ENCODE measurements at regions of chr10 and their contacts with region 1.

Region 1: DNA sequence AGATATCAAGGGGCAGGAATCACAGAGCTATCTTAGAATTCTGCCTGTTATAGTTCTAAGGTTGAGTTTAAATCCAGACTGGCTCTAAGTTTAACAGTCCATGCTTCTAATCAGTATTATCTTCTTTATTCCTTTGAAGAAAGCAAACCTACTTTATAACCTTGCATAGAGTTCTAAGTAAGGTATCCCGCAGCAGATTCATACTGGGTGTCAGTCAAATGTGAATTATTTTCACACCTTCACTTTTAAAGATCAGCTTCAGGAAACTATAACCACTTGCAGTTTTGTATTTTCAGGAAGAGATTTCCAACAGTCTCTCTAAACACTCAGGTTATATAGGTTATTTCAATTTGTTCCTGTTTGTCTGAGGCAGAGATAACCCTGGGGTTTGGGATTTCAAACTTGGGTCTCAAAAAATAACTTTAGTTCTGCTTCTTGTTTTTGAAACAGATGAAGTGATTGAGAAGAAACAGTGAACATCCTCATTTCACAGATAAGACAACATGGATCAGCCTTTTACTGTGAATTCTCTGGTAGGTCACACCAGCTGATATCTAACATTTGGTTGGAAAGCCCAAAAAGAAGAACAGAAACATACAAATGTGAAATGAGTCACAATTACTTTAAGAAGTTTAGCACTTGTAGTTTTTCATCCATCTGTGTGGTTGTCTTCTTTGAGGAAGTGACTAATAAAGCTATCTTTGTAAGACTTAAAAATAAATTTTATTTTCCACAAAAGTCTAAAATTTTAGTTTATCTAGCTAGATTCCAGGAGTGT is 21.4 kb downstream of the STAMBPL1 start:
- DNase-seq: no peak
- H3K4me3 Mint-ChIP-seq: peak overlapping the region; percentile 2
- H3K27ac Mint-ChIP-seq: peak overlapping the region; percentile 82
- H3K4me1 Mint-ChIP-seq: peaks cover 59% of the 10 kb centered on the region
- H3K27me3 Mint-ChIP-seq: no peaks in the 10 kb centered on the region

Region 2: GRCh38 chr10:88820748-88821389 is 80.5 kb before region 1 on chr10:
- CTCF ChIA-PET with region 1: interaction called, 3 read pairs
- intact Hi-C with region 1: loop called (anchors 1 kb)
- DNase-seq: no peak
- H3K4me3 Mint-ChIP-seq: no peak overlapping the region
- H3K27ac Mint-ChIP-seq: no peak overlapping the region
- H3K4me1 Mint-ChIP-seq: peaks cover 27% of the 10 kb centered on the region
- H3K27me3 Mint-ChIP-seq: no peaks in the 10 kb centered on the region

Region 3: DNA sequence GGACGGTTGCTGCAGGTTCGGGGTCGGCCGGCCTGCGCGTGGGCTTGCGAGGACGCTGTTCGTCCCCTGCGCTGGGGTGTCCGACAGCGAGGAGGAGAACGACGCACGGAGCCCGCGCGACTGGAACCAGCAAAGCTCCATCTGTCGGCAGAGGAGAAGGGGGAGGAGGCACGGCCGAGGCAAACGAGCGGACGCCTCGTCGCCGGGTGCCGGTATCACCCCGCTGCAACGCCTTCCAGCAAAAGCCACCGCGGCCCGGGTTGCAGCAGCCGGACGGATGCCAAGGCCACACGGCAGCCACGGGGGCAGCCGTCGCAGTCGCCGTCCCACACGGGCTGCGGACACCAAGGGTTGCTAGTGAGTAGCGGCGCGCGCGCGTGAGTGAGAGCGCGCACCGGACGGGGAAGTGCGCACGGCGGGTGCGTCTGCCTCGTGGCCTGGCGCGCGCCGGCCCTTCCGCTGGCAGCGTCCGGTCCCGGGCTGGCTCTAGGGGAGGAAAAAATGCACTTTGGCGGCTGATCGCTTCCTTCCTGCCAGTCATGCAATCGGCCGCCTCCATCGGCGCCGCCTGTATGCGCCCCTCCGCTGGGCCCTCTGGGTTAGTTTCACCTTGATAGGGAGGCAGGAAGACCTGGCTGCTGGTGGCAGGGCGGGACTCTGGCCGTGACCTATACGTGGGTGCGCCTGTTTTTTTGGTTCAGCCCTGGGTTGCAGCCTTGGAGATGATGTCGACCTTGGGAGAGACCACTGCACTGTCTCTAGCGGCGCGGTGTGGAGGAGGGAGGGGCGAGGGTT is 20.9 kb before region 1 on chr10:
- CTCF ChIA-PET with region 1: interaction called, 22 read pairs
- intact Hi-C with region 1: loop called (anchors 1 kb)
- DNase-seq: peak; percentile 82
- H3K4me3 Mint-ChIP-seq: peak overlapping the region; percentile 95
- H3K27ac Mint-ChIP-seq: peak overlapping the region; percentile 97
- H3K4me1 Mint-ChIP-seq: peaks cover 58% of the 10 kb centered on the region
- H3K27me3 Mint-ChIP-seq: no peaks in the 10 kb centered on the region

Region 4: GRCh38 chr10:88886557-88886956 is 14.8 kb before region 1 on chr10:
- CTCF ChIA-PET with region 1: interaction called, 22 read pairs
- intact Hi-C with region 1: loop called (anchors 1 kb)
- DNase-seq: peak; percentile 53
- H3K4me3 Mint-ChIP-seq: no peak overlapping the region
- H3K27ac Mint-ChIP-seq: no peak overlapping the region
- H3K4me1 Mint-ChIP-seq: peaks cover 78% of the 10 kb centered on the region
- H3K27me3 Mint-ChIP-seq: no peaks in the 10 kb centered on the region

Measured in activated naive CD4-positive, alpha-beta T cell treated with anti-CD3 and anti-CD28 coated beads for 36 hours (primary cell).